Posterior cingulate gyrus (tissue), 11 donors: ENCODE measurements at regions of chr1 and their contacts with region 1.

Region 1: DNA sequence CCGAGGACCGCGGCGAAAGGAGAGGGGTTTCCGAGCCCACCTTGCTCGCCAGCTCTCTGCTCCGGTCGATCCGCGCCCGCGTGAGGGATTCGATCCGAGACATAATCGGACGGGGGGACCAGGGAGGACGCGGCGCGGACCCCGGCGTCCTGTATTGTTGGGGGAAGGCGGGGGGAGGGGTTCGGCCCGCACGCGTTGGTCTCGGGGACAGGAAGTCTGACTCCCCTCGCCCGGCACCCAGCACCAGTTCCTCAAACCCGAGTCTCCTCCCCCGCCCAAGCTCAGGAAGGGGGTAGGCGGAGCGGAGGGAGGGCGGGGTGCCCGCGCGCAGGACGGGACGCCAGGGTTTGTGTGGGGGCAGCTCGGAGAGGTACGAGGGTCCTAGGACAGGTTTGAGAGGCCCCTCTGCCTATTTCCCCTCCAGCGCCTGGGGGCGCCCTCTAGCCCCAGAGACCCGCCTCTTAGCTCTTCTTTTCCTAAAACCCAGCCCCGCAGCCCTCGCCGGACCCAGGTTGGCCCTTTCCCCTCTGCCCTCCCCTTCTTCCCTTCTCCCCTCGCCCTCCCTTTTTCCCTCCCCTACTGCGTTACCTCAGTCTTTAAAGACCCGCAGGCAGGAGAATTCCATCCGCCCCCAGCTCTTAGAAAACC is at the start of gene ARHGEF2:
- DNase-seq: peak in 9 of 10 donors; percentile 55 to 94 (median 66)

Region 2: GRCh38 chr1:155871390-155871789 is 107.1 kb before region 1 on chr1:
- intact Hi-C with region 1: loop called (anchors 5 kb)
- DNase-seq: peak; percentile 81 to 98 (median 90)

Region 3: DNA sequence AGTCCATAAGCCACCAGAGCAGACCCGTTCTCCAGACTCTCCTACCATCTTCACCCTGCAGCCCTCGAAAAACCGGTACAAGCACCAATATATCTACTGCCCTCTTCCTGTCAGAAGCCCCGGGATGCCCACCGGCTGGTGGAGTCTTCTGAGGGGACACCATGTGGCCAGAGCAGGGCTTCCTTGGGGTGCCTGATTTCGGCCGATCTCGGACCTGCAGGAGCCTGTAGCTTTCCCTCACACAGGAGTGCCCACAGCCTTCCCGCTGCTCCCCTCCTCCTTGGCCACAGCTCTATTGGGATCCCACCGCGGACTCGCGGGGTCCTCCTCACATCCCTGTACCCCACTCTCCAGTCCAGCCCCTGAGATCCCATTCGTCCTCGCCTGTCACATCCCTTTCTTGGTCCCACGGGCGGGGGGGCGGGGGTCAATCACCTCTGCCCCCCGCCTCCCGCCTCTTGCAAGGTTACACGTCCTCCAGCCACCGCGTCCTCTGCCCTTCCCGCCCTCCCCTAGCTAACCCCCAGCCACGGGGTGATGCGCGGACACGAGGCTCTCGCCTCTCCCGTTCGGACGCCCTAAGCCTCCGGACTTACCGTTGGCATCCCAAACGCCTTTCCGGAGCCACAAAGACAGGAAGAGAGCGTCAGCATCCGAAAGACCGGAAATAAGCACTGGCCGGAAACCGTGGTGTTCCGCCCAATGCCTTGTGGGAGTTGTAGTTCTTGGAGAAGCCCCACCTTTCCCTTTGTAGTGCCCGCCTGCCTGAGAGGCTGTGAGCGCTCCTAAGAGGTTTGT is 42.0 kb after region 1 on chr1 and contains the start of gene SSR2:
- intact Hi-C with region 1: loop called (anchors 2 kb)
- DNase-seq: peak; percentile 81 to 98 (median 89)